CD4-positive, alpha-beta T cell (primary cell): ENCODE measurements at regions of chr22 and their contacts with region 1.

Region 1: DNA sequence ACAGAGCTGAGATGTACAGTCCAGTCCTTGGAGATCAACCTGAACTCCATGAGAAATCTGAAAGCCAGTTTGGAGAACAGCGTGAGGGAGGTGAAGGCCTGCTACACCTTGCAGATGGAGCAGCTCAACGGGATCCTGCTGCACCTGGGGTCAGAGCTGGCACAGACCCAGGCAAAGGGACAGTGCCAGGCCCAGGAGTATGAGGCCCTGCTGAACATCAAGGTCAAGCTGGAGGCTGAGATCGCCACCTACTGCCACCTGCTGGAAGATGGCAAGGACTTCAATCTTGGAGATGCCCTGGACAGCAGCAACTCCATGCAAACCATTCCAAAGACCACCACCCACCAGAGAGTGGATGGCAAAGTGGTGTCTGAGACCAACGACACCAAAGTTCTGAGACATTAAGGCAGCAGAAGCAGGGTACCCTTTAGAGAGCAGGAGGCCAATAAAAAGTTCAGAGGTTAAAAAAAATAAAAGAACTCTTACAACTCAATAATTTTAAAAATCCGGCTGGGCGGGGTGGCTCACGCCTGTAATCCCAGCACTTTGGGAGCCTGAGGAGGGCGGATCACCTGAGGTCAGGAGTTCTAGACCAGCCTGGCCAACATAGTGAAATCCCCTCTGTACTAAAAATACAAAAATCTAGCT is 69.9 kb upstream of the RTL6 start:
- DNase-seq: peak; percentile 17 to 73 (median 38)
- ATAC-seq: no peak
- H3K4me3 ChIP-seq: no peak overlapping the region
- H3K4me3 Mint-ChIP-seq: no peak overlapping the region
- H3K27ac ChIP-seq: no peak overlapping the region
- H3K27ac Mint-ChIP-seq: no peak overlapping the region
- H3K4me1 ChIP-seq: no peaks in the 10 kb centered on the region
- H3K4me1 Mint-ChIP-seq: no peaks in the 10 kb centered on the region
- H3K27me3 ChIP-seq: no peaks in the 10 kb centered on the region
- H3K27me3 Mint-ChIP-seq: no peaks in the 10 kb centered on the region
- CTCF ChIP-seq: peak; percentile 62

Region 2: DNA sequence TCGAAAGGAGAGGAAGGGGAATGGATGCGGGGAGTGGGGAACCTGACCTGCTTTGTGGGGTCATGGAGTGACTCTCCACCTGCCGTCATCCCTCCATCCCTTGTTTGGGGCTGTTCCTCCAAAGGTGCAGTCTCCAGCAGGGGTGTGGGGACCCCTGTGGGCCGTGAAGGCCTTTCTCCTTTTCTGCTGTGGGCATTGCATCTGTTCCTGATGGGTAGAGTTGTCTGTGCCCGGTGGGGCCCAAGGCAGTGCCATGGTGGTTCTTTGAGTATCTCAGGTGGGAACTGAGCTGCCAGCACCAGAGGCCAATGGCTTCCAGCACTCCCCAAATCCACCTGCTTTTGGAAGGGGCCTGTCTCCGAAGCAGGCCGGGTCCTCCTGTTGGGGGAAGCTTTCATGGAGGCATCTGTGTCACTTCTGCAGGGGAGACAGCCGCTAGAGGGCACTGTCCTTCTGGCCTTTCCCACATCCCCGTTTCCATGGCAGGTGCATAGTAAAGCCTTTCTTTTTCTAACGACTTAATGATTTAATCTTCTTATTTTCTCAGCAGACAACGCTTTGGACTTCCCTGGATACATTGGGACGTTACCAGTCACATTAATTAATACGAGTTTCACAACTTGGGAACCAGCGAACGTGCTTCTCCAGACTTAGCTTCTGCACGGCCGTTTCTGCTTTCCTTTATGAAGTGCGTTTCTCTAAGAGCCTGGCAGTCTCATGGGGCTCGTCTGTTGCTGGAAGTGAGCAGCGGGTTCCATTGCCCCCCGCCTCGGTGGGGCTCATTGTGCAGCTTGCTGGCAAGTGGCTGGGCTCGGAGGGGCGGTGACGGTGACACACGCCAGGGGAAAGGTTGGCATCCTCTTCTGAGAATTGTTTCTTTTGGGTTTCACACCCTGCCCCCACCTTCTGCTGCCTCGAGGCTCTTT is 486.8 kb before region 1 on chr22:
- CTCF ChIA-PET with region 1: no interaction called
- POLR2A ChIA-PET with region 1: no interaction called
- intact Hi-C with region 1: loop called in 1 of 2 experiments (anchors 1 kb)
- DNase-seq: peak; percentile 52 to 82 (median 64)
- ATAC-seq: peak; percentile 55
- H3K4me3 ChIP-seq: no peak overlapping the region
- H3K4me3 Mint-ChIP-seq: no peak overlapping the region
- H3K27ac ChIP-seq: no peak overlapping the region
- H3K27ac Mint-ChIP-seq: no peak overlapping the region
- H3K4me1 ChIP-seq: peaks cover 5% of the 10 kb centered on the region
- H3K4me1 Mint-ChIP-seq: no peaks in the 10 kb centered on the region
- H3K27me3 ChIP-seq: no peaks in the 10 kb centered on the region
- H3K27me3 Mint-ChIP-seq: no peaks in the 10 kb centered on the region
- CTCF ChIP-seq: peak; percentile 88

Region 3: GRCh38 chr22:44337678-44338004 is 230.3 kb before region 1 on chr22:
- CTCF ChIA-PET with region 1: no interaction called
- POLR2A ChIA-PET with region 1: no interaction called
- intact Hi-C with region 1: loop called in 1 of 2 experiments (anchors 5 kb)
- DNase-seq: no peak
- ATAC-seq: no peak
- H3K4me3 ChIP-seq: no peak overlapping the region
- H3K4me3 Mint-ChIP-seq: no peak overlapping the region
- H3K27ac ChIP-seq: no peak overlapping the region
- H3K27ac Mint-ChIP-seq: no peak overlapping the region
- H3K4me1 ChIP-seq: no peaks in the 10 kb centered on the region
- H3K4me1 Mint-ChIP-seq: no peaks in the 10 kb centered on the region
- H3K27me3 ChIP-seq: peaks cover 6 to 17% of the 10 kb centered on the region in 2 experiments
- H3K27me3 Mint-ChIP-seq: peaks cover 5% of the 10 kb centered on the region
- CTCF ChIP-seq: no peak

Region 4: GRCh38 chr22:44399906-44400762 is 167.8 kb before region 1 on chr22:
- CTCF ChIA-PET with region 1: no interaction called
- POLR2A ChIA-PET with region 1: no interaction called
- intact Hi-C with region 1: loop called in 1 of 2 experiments (anchors 2 kb)
- DNase-seq: peak in 1 of 14 experiments; percentile 14
- ATAC-seq: no peak
- H3K4me3 ChIP-seq: no peak overlapping the region
- H3K4me3 Mint-ChIP-seq: no peak overlapping the region
- H3K27ac ChIP-seq: no peak overlapping the region
- H3K27ac Mint-ChIP-seq: no peak overlapping the region
- H3K4me1 ChIP-seq: no peaks in the 10 kb centered on the region
- H3K4me1 Mint-ChIP-seq: no peaks in the 10 kb centered on the region
- H3K27me3 ChIP-seq: no peaks in the 10 kb centered on the region
- H3K27me3 Mint-ChIP-seq: no peaks in the 10 kb centered on the region
- CTCF ChIP-seq: no peak